Posterior vena cava (tissue), 2 donors: ENCODE measurements at regions of chr10 and their contacts with region 1.

Region 1: DNA sequence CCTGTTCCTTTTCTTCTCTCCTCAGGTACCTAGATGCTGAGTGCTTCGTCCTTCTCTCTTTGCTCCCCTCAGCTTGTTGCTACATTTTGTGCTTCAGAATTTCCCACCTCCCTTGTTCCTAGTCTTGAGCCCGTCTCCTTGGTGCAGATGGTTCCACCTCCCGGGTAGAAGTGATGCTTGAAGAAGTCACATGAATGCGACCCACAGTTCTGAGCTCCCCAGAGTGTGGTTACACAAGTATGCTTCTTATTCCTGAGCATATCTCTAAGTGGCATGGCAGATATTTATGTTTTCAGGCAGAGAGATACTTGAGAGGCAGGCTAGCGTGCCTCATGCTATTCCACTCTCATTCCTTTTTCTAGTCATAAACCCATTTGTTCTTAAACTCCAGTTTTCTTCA is 34.0 kb downstream of the INPP5F start:
- DNase-seq: no peak

Region 2: DNA sequence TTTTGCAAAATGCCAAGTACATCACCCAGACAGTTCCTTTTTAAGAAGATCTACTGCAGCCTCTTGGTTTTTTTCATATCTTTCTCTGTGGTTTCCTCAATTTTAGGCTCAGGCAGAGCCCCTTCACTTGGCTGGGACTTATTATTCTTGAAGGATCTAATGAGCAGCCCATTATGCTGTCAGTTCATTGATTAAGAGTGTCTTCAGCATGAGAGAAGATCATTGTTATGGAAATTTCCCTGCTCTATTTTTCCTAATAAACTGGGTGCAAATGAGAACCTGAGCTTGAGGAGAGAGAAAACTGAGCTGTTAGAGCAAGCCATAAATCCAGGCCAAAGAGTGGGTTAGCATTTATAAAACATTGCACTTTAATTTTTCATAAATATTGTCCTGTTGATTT is 279.2 kb after region 1 on chr10:
- intact Hi-C with region 1: loop called in 1 of 2 experiments (anchors 5 kb)
- DNase-seq: no peak